ENCODE measurements at regions of chr4 and their contacts with region 1.

Region 1: DNA sequence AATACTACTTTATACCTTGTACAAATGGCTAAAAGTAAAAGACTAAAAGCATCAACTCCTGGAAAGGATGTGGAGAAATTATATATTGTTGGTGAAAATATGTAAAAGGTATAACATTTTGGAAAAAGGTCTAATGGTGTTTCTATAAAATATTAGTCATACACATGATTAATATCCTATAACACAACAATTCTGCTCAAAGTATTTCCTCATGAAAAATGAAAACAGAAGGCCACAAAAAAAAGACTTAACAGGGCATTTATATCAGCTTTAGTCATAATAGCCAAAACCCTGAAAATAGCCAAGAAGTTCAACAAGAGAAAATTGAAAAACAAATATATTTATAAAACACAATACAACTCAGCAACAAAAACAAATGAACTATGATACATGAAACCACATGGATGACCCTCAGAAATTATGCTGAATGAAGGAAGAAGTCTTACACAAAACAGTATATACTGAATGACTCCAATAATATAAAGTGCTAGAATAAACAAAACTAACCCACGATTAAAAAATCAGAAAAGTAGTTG is 38.8 kb downstream of the TBCK start:
- DNase-seq: peak; percentile 2
- ATAC-seq: no peak
- H3K4me3 ChIP-seq: no peak overlapping the region
- H3K27ac ChIP-seq: no peak overlapping the region
- H3K4me1 ChIP-seq: peaks cover 2% of the 10 kb centered on the region; the same call in 1 of the 2 replicates
- H3K27me3 ChIP-seq: no peaks in the 10 kb centered on the region
- CTCF ChIP-seq: no peak
- POLR2A ChIP-seq: no peak
- RAD21 ChIP-seq: no peak

Region 2: GRCh38 chr4:106364282-106364681 is 87.1 kb after region 1 on chr4:
- CTCF ChIA-PET with region 1: no interaction called
- POLR2A ChIA-PET with region 1: no interaction called
- dilution Hi-C with region 1: no loop called
- in situ Hi-C with region 1: no loop called
- intact Hi-C with region 1: loop called (anchors 5 kb)
- DNase-seq: no peak
- ATAC-seq: no peak
- H3K4me3 ChIP-seq: no peak overlapping the region
- H3K27ac ChIP-seq: no peak overlapping the region
- H3K4me1 ChIP-seq: peaks cover 8% of the 10 kb centered on the region
- H3K27me3 ChIP-seq: no peaks in the 10 kb centered on the region
- CTCF ChIP-seq: no peak
- POLR2A ChIP-seq: no peak
- RAD21 ChIP-seq: no peak

Region 3: GRCh38 chr4:106494066-106494465 is 216.9 kb after region 1 on chr4:
- CTCF ChIA-PET with region 1: no interaction called
- POLR2A ChIA-PET with region 1: no interaction called
- dilution Hi-C with region 1: no loop called
- in situ Hi-C with region 1: no loop called
- intact Hi-C with region 1: no loop called
- DNase-seq: peak; percentile 4
- ATAC-seq: no peak
- H3K4me3 ChIP-seq: no peak overlapping the region
- H3K27ac ChIP-seq: no peak overlapping the region
- H3K4me1 ChIP-seq: no peaks in the 10 kb centered on the region
- H3K27me3 ChIP-seq: no peaks in the 10 kb centered on the region
- CTCF ChIP-seq: no peak
- POLR2A ChIP-seq: no peak
- RAD21 ChIP-seq: no peak

Measured in IMR-90 (cell line).